ENCODE measurements at regions of chrX and their contacts with region 1.

Region 1: GRCh38 chrX:16882702-16883486 is 12.7 kb upstream of the RBBP7 start:
- DNase-seq: peak; percentile 72
- H3K4me3 Mint-ChIP-seq: peak overlapping the region; percentile 73
- H3K27ac Mint-ChIP-seq: peak overlapping the region; percentile 27
- H3K4me1 Mint-ChIP-seq: no peaks in the 10 kb centered on the region
- H3K27me3 Mint-ChIP-seq: peaks cover 69% of the 10 kb centered on the region
- CTCF ChIP-seq: peak; percentile 51

Region 2: GRCh38 chrX:16418650-16419049 is 464.2 kb before region 1 on chrX:
- CTCF ChIA-PET with region 1: no interaction called
- POLR2A ChIA-PET with region 1: no interaction called
- intact Hi-C with region 1: no loop called
- DNase-seq: no peak
- H3K4me3 Mint-ChIP-seq: no peak overlapping the region
- H3K27ac Mint-ChIP-seq: no peak overlapping the region
- H3K4me1 Mint-ChIP-seq: no peaks in the 10 kb centered on the region
- H3K27me3 Mint-ChIP-seq: peaks cover 41% of the 10 kb centered on the region
- CTCF ChIP-seq: no peak

Region 3: GRCh38 chrX:16870095-16870860 is 12.6 kb before region 1 on chrX and contains the start of gene RBBP7:
- CTCF ChIA-PET with region 1: interaction called, 42 read pairs
- POLR2A ChIA-PET with region 1: interaction called, 30 read pairs
- intact Hi-C with region 1: no loop called
- DNase-seq: peak; percentile 94
- H3K4me3 Mint-ChIP-seq: peak within 1 kb of the TSS; percentile 98
- H3K27ac Mint-ChIP-seq: peak within 1 kb of the TSS; percentile 90
- H3K4me1 Mint-ChIP-seq: peaks cover 15% of the 10 kb centered on the region
- H3K27me3 Mint-ChIP-seq: peaks cover 30% of the 10 kb centered on the region
- CTCF ChIP-seq: no peak
- total RNA-seq, gene RBBP7: 81.9 and 95.2 TPM in 2 replicates

Region 4: GRCh38 chrX:16946361-16946964 is 63.6 kb after region 1 on chrX and contains the start of gene REPS2:
- CTCF ChIA-PET with region 1: no interaction called
- POLR2A ChIA-PET with region 1: interaction called, 5 read pairs
- intact Hi-C with region 1: loop called (anchors 5 kb)
- DNase-seq: peak; percentile 79
- H3K4me3 Mint-ChIP-seq: peak within 1 kb of the TSS; percentile 76
- H3K27ac Mint-ChIP-seq: no peak within 1 kb of the TSS
- H3K4me1 Mint-ChIP-seq: no peaks in the 10 kb centered on the region
- H3K27me3 Mint-ChIP-seq: peaks cover 53% of the 10 kb centered on the region
- CTCF ChIP-seq: no peak
- total RNA-seq, gene REPS2: 6.9 and 8.1 TPM in 2 replicates

Region 5: DNA sequence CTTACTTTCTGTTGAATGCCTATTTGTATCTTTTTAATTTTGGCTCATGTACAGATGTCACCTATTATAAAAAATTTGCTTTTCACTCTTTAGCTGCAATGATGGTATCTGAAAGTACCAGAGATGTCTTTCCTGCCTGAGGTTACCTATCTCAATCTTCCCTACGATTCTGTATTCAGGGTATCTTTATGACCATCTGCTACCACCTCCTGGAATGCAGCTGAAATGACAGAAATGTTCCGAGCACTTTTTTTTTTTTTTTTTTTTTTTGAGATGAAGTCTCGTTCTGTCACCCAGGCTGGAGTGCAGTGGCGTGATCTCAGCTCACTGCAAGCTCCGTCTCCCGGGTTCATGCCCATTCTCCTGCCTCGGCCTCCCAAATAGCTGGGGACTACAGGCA is 199.9 kb after region 1 on chrX:
- CTCF ChIA-PET with region 1: interaction called, 15 read pairs
- POLR2A ChIA-PET with region 1: no interaction called
- intact Hi-C with region 1: no loop called
- DNase-seq: peak; percentile 47
- H3K4me3 Mint-ChIP-seq: no peak overlapping the region
- H3K27ac Mint-ChIP-seq: no peak overlapping the region
- H3K4me1 Mint-ChIP-seq: no peaks in the 10 kb centered on the region
- H3K27me3 Mint-ChIP-seq: peaks cover 87% of the 10 kb centered on the region
- CTCF ChIP-seq: no peak

Measured in MCF 10A (cell line).